Mammary epithelial cell (primary cell): ENCODE measurements at regions of chr19 and their contacts with region 1.

Region 1: GRCh38 chr19:37334179-37335071 is 36.5 kb upstream of the ZNF527 start:
- DNase-seq: peak; percentile 84
- H3K4me3 ChIP-seq: peak overlapping the region; percentile 79 to 89 (median 82)
- H3K27ac ChIP-seq: peak overlapping the region; percentile 85
- H3K4me1 ChIP-seq: peaks cover 8% of the 10 kb centered on the region
- H3K27me3 ChIP-seq: no peaks in the 10 kb centered on the region
- CTCF ChIP-seq: no peak

Region 2: GRCh38 chr19:36915992-36916830 is 418.2 kb before region 1 on chr19 and contains the starts of genes ZNF568 and ZNF829:
- CTCF ChIA-PET with region 1: no interaction called
- dilution Hi-C with region 1: no loop called
- in situ Hi-C with region 1: no loop called
- intact Hi-C with region 1: loop called (anchors 1 kb)
- DNase-seq: peak; percentile 89
- H3K4me3 ChIP-seq: peak within 1 kb of the TSS; percentile 44 to 81 (median 75)
- H3K27ac ChIP-seq: peak within 1 kb of the TSS; percentile 64
- H3K4me1 ChIP-seq: no peaks in the 10 kb centered on the region
- H3K27me3 ChIP-seq: no peaks in the 10 kb centered on the region
- CTCF ChIP-seq: peak; percentile 31 to 73
- total RNA-seq, gene ZNF568: 9.4 to 15.7 TPM
- total RNA-seq, gene ZNF829: 5.1 to 6.0 TPM

Region 3: DNA sequence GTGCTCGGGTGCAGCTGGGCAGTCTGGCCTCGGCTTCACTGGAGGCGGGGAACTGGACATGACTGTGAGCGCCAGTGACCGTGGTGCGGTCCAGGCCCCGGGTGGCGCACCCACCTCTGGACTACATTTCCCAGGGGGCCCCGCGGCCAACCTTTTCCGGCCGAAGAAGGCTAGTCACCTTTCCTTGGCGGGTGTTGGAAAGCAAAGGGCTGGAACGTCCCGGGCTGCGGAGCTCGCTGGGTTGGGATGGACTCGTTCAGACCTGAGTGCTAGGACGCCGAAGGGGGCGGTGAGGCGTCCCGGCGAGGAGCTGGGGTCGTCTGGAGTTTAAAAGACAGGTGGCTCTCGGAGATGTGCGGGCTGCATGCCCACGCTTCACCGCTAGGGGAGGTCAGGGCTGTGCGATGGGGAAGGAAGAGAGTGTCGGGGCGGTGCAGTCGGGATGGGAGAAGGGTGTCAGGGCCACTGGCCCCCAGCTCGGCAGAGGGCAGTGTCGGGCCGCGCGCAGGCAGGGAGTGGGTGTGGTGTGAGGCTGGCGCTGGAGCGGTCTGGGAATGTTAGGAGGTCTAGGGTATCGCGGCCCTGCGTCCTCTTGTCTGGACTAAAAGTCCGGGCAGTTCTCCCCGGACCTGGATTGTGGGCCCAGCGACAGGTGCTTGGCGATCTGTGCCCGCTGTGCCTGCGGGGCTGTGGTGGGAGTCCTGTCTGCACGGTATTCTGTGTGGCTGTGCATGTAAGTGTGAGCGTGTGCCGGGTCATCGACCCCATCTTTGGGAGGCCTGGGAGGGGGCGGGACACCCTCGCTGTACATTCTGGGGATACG is 361.2 kb before region 1 on chr19:
- CTCF ChIA-PET with region 1: no interaction called
- dilution Hi-C with region 1: no loop called
- in situ Hi-C with region 1: no loop called
- intact Hi-C with region 1: loop called (anchors 5 kb)
- DNase-seq: peak; percentile 77
- H3K4me3 ChIP-seq: peak overlapping the region; percentile 57 to 61 (median 60)
- H3K27ac ChIP-seq: no peak overlapping the region
- H3K4me1 ChIP-seq: peaks cover 7% of the 10 kb centered on the region
- H3K27me3 ChIP-seq: no peaks in the 10 kb centered on the region
- CTCF ChIP-seq: peak; percentile 44 to 77

Region 4: GRCh38 chr19:37059142-37059541 is 275.3 kb before region 1 on chr19:
- CTCF ChIA-PET with region 1: no interaction called
- dilution Hi-C with region 1: no loop called
- in situ Hi-C with region 1: no loop called
- intact Hi-C with region 1: no loop called
- DNase-seq: no peak
- H3K4me3 ChIP-seq: no peak overlapping the region
- H3K27ac ChIP-seq: no peak overlapping the region
- H3K4me1 ChIP-seq: no peaks in the 10 kb centered on the region
- H3K27me3 ChIP-seq: no peaks in the 10 kb centered on the region
- CTCF ChIP-seq: no peak

Region 5: GRCh38 chr19:37313335-37313627 is 21.1 kb before region 1 on chr19:
- CTCF ChIA-PET with region 1: no interaction called
- dilution Hi-C with region 1: no loop called
- in situ Hi-C with region 1: no loop called
- intact Hi-C with region 1: loop called (anchors 1 kb)
- DNase-seq: no peak
- H3K4me3 ChIP-seq: no peak overlapping the region
- H3K27ac ChIP-seq: no peak overlapping the region
- H3K4me1 ChIP-seq: no peaks in the 10 kb centered on the region
- H3K27me3 ChIP-seq: no peaks in the 10 kb centered on the region
- CTCF ChIP-seq: no peak

Region 6: GRCh38 chr19:37370880-37371661 is 36.6 kb after region 1 on chr19 and contains the start of gene ZNF527:
- CTCF ChIA-PET with region 1: no interaction called
- dilution Hi-C with region 1: no loop called
- in situ Hi-C with region 1: no loop called
- intact Hi-C with region 1: loop called (anchors 2 kb)
- DNase-seq: peak; percentile 96
- H3K4me3 ChIP-seq: peak within 1 kb of the TSS; percentile 76 to 82 (median 78)
- H3K27ac ChIP-seq: peak within 1 kb of the TSS; percentile 5
- H3K4me1 ChIP-seq: peaks cover 5% of the 10 kb centered on the region
- H3K27me3 ChIP-seq: no peaks in the 10 kb centered on the region
- CTCF ChIP-seq: no peak
- total RNA-seq, gene ZNF527: 3.2 to 6.5 TPM